Panc1 (cell line): ENCODE measurements at regions of chr7 and their contacts with region 1.

Region 1: DNA sequence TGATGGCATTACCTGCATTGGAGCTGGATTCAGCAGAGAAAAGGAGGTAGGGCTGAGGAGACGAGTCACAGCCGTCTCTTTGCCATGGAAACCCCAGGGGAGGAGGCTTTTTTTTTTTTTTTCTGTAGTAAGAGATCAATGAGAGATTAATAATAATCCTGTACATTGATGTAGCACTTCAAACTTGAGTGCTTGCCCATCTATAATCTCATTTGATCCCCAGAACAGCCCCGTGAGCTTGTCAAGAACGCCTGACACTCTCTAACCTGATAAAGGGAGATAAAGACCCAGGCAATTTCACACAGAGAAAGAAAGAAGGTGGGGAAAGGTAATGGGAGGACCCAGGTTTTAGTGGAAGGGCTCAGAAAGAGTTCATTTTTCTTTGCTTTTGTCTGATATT is 195.2 kb upstream of the FOXK1 start:
- DNase-seq: no peak
- ATAC-seq: no peak
- H3K4me3 ChIP-seq: no peak overlapping the region
- H3K27ac ChIP-seq: no peak overlapping the region
- H3K4me1 ChIP-seq: no peaks in the 10 kb centered on the region
- H3K27me3 ChIP-seq: no peaks in the 10 kb centered on the region
- CTCF ChIP-seq: no peak

Region 2: DNA sequence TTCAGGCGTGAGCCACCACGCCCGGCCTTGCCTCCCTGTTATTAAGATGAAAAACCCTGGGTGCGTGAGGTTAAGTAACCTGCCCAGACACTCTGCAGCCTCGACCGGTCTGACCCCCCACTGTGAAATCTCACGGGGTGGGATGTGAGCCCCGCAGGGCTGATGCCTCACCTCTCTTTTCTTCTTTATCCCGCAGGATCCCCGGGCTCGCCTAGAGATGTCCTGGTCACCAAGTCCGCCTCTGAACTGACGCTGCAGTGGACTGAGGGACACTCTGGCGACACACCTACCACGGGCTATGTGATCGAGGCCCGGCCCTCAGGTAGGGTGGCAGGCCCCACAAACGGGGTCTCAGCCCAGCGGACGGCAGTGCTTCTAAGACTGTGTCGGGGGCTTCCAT is 265.9 kb before region 1 on chr7:
- CTCF ChIA-PET with region 1: interaction called, 5 read pairs
- POLR2A ChIA-PET with region 1: interaction called, 13 read pairs
- in situ Hi-C with region 1: no loop called
- intact Hi-C with region 1: no loop called
- DNase-seq: no peak
- ATAC-seq: no peak
- H3K4me3 ChIP-seq: no peak overlapping the region
- H3K27ac ChIP-seq: no peak overlapping the region
- H3K4me1 ChIP-seq: no peaks in the 10 kb centered on the region
- H3K27me3 ChIP-seq: no peaks in the 10 kb centered on the region
- CTCF ChIP-seq: no peak

Region 3: DNA sequence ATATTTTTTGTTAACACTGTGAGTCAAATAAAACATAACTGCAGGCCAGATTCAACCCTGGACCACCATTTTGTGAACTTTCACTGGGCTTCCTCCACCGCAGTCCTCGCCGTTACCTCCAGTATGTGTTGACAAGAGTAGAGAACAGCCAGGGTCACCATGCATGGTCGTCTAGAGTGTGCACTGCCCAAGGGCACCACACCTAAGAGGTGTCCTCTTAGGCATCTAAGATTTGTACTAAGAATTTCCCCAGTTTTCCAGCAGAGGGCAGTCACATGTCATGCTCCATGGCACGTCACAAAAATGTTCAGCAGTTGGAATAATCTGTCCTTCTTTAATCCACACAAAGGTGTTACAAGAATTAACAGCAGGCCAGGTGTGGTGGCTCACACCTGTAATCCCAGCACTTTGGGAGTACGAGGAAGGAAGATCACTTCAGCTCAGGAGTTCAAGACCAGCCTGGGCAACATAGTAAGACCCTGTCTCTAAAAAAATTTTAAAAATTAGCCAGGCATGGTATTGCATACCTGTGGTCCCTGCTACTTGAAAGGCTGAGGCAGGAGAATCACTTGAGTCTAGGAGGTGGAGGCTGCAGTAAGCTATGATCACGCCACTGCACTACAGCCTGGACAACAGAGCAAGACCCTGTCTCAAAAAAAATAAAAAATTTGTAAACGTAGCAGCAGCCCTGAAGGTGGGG is 124.0 kb after region 1 on chr7:
- CTCF ChIA-PET with region 1: no interaction called
- POLR2A ChIA-PET with region 1: no interaction called
- in situ Hi-C with region 1: no loop called
- intact Hi-C with region 1: no loop called
- DNase-seq: peak; percentile 63
- ATAC-seq: peak; percentile 87
- H3K4me3 ChIP-seq: no peak overlapping the region
- H3K27ac ChIP-seq: no peak overlapping the region
- H3K4me1 ChIP-seq: peaks cover 5% of the 10 kb centered on the region; the same call in 1 of the 2 replicates
- H3K27me3 ChIP-seq: no peaks in the 10 kb centered on the region
- CTCF ChIP-seq: peak; percentile 96